Activated naive CD8-positive, alpha-beta T cell treated with anti-CD3 and anti-CD28 coated beads, Interleukin-2, amount 10 ng/mL, durations not matched to agents 7 days and 5 days (primary cell): ENCODE measurements at regions of chr20 and their contacts with region 1.

Region 1: DNA sequence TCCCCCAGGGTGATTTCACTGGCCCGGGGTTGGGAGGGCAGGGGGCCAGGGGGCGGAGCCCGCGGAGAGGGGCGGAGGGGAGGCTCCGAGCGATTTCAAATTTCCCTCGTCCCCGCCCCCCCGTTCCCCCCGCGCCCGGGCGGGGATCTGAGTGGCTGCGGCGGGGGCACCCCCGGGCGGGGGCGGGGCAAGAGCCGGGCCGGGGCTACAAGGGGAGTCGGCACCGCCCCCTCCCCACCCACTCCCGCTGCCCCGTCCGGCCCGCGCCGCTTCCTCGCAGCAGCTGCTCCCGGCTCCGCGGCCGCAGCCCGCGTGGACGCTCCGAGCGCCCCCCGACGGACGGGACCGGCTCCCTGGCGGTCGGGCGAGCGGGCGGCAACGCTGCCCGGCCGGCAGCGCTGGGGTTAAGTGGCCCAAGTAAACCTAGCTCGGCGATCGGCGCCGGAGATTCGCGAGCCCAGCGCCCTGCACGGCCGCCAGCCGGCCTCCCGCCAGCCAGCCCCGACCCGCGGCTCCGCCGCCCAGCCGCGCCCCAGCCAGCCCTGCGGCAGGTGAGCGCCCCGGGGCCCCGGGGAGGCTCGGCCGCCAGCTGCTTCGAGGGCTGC is at the start of gene DNMT3B:
- DNase-seq: peak; percentile 85
- ATAC-seq: peak; percentile 77
- H3K4me3 Mint-ChIP-seq: peak within 1 kb of the TSS; percentile 92
- H3K27ac Mint-ChIP-seq: peak within 1 kb of the TSS; percentile 85
- H3K4me1 Mint-ChIP-seq: peaks cover 26% of the 10 kb centered on the region
- H3K27me3 Mint-ChIP-seq: peaks cover 4% of the 10 kb centered on the region
- total RNA-seq, gene DNMT3B: 4.9 to 6.6 TPM

Region 2: GRCh38 chr20:32674362-32674789 is 87.9 kb before region 1 on chr20:
- POLR2A ChIA-PET with region 1: interaction called, 10 read pairs
- DNase-seq: peak; percentile 71
- ATAC-seq: no peak
- H3K4me3 Mint-ChIP-seq: no peak overlapping the region
- H3K27ac Mint-ChIP-seq: peak overlapping the region; percentile 0
- H3K4me1 Mint-ChIP-seq: peaks cover 29% of the 10 kb centered on the region
- H3K27me3 Mint-ChIP-seq: no peaks in the 10 kb centered on the region

Region 3: GRCh38 chr20:32737371-32738223 is 24.7 kb before region 1 on chr20:
- POLR2A ChIA-PET with region 1: interaction called, 33 read pairs
- DNase-seq: peak; percentile 42
- ATAC-seq: peak; percentile 86
- H3K4me3 Mint-ChIP-seq: peak overlapping the region; percentile 74
- H3K27ac Mint-ChIP-seq: peak overlapping the region; percentile 86
- H3K4me1 Mint-ChIP-seq: peaks cover 33% of the 10 kb centered on the region
- H3K27me3 Mint-ChIP-seq: no peaks in the 10 kb centered on the region

Region 4: GRCh38 chr20:32743237-32744112 is 18.8 kb before region 1 on chr20 and contains the start of gene COMMD7:
- POLR2A ChIA-PET with region 1: interaction called, 33 read pairs
- DNase-seq: peak; percentile 78
- ATAC-seq: peak; percentile 81
- H3K4me3 Mint-ChIP-seq: peak within 1 kb of the TSS; percentile 97
- H3K27ac Mint-ChIP-seq: peak within 1 kb of the TSS; percentile 99
- H3K4me1 Mint-ChIP-seq: peaks cover 32% of the 10 kb centered on the region
- H3K27me3 Mint-ChIP-seq: no peaks in the 10 kb centered on the region
- total RNA-seq, gene COMMD7: 52.6 to 55.6 TPM